Mammary epithelial cell (primary cell): ENCODE measurements at regions of chr15 and their contacts with region 1.

Region 1: DNA sequence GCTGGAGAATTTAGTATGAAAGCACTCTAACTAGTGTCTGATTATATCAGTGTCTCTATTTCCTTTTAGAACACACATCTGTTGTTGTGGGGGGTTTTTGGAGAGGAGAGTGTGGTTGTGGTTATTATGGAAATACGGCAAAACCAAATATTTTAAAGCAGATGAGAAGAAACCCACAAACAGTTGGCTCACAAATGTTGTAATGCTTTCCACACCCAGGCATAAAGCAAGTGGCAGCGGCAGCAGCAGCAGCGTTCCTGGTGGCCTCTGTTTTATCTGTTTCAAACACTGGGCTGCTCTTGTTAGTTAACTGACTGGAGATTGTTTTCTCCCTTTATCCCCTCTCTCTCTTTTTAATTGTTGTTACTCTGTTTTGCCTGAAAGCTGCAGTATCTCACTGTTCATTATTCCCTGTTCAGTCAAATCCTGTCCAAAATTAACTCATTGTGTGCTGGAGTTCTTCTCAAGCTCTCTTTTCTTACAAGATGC is 1045.5 kb upstream of the NR2F2 start:
- DNase-seq: no peak
- H3K4me3 ChIP-seq: no peak overlapping the region
- H3K27ac ChIP-seq: no peak overlapping the region
- H3K4me1 ChIP-seq: peaks cover 5% of the 10 kb centered on the region
- H3K27me3 ChIP-seq: no peaks in the 10 kb centered on the region
- CTCF ChIP-seq: no peak

Region 2: GRCh38 chr15:95041299-95041698 is 243.7 kb before region 1 on chr15:
- CTCF ChIA-PET with region 1: no interaction called
- dilution Hi-C with region 1: loop called (anchors 10 kb)
- in situ Hi-C with region 1: loop called in 1 of 2 experiments (anchors 25 kb)
- intact Hi-C with region 1: no loop called
- DNase-seq: no peak
- H3K4me3 ChIP-seq: no peak overlapping the region
- H3K27ac ChIP-seq: no peak overlapping the region
- H3K4me1 ChIP-seq: no peaks in the 10 kb centered on the region
- H3K27me3 ChIP-seq: no peaks in the 10 kb centered on the region
- CTCF ChIP-seq: no peak

Region 3: GRCh38 chr15:95446854-95447253 is 161.9 kb after region 1 on chr15:
- CTCF ChIA-PET with region 1: no interaction called
- dilution Hi-C with region 1: no loop called
- in situ Hi-C with region 1: no loop called
- intact Hi-C with region 1: no loop called
- DNase-seq: no peak
- H3K4me3 ChIP-seq: no peak overlapping the region
- H3K27ac ChIP-seq: no peak overlapping the region
- H3K4me1 ChIP-seq: no peaks in the 10 kb centered on the region
- H3K27me3 ChIP-seq: no peaks in the 10 kb centered on the region
- CTCF ChIP-seq: no peak